RWPE1 (cell line): ENCODE measurements at regions of chr3 and their contacts with region 1.

Region 1: DNA sequence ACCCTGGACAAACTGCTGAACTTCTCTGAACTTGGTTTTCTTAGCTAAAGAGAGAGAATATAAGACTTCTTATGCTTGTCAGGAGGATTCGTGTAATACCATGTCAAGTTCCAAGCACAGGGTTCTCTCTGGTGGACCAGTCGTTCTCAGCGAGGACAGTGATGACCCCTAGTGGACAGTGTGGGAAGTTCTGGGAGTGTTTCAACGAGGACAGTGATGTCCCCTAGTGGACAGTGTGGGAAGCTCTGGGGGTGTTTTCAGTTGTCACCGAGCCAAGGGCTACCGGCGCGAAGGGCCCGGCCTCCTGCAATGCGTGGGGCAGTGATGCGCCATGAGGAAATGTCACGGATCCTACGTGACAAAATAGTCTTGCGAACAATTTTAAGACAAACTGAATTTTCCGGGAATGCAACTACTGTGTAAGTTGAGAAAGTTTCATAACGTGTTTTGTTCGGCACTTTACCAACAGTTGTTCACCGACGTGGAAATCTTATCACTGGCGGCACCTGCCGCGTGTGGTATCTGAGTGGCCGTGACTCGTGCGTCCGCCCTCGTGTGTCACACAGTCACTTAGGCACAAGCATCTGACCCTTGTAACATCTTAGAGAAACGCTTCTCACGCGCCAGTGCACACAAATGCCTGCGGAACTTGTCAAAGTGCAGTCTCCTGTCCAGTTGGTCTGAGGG is 39.3 kb upstream of the MUC4 start:
- DNase-seq: peak; percentile 88
- H3K27ac ChIP-seq: no peak overlapping the region
- CTCF ChIP-seq: peak; percentile 98

Region 2: DNA sequence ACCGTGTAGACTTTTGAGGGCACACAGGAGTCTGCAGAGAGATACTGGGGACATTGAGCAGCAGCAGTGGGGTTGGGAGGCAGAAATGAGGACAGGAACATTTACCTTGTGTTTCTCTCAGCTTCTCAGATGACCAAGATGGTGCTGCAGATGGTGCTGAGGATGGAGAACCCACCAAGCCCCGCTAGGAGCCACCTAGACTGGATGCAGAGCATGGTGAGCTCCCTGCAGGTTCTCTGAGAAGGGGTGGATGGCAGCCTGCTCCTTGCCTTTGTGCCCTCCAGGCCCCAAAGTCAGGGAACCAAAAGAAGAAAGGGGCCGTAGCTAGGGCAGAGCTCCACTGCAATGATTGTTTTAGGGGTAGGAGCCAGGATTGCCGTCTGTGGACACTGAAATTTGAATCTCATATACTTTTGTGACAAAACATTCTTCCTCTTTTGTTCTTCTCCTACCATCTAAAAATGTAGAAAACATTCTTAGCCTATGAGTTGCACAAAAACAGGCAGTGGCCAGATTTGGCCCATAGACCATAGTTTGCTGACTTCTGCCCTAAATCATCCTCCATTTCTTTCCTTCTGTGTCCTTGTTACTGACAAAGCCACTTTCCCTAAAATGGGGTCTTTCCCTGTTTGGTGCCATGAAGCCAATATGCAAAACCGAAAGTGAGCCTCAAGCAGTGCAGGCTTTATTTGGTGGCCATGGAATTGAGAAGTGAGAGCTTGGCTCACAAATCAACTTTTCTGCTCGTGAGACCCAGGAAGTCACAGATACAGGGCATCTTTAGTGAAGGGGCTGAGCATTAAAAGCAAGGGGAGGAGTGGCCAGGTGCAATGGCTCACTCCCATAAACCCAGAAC is 142.1 kb before region 1 on chr3:
- CTCF ChIA-PET with region 1: no interaction called
- POLR2A ChIA-PET with region 1: no interaction called
- DNase-seq: no peak
- H3K27ac ChIP-seq: no peak overlapping the region
- CTCF ChIP-seq: no peak

Region 3: GRCh38 chr3:195815169-195815771 is 35.7 kb before region 1 on chr3:
- CTCF ChIA-PET with region 1: interaction called, 11 read pairs
- POLR2A ChIA-PET with region 1: no interaction called
- DNase-seq: no peak
- H3K27ac ChIP-seq: no peak overlapping the region
- CTCF ChIP-seq: no peak

Region 4: GRCh38 chr3:195835791-195836190 is 15.2 kb before region 1 on chr3:
- CTCF ChIA-PET with region 1: interaction called, 10 read pairs
- POLR2A ChIA-PET with region 1: no interaction called
- DNase-seq: no peak
- H3K27ac ChIP-seq: no peak overlapping the region
- CTCF ChIP-seq: no peak

Region 5: GRCh38 chr3:195863121-195864006 is 12.4 kb after region 1 on chr3:
- CTCF ChIA-PET with region 1: interaction called, 21 read pairs
- POLR2A ChIA-PET with region 1: no interaction called
- DNase-seq: peak; percentile 77
- H3K27ac ChIP-seq: peak overlapping the region; percentile 98
- CTCF ChIP-seq: peak; percentile 98

Region 6: DNA sequence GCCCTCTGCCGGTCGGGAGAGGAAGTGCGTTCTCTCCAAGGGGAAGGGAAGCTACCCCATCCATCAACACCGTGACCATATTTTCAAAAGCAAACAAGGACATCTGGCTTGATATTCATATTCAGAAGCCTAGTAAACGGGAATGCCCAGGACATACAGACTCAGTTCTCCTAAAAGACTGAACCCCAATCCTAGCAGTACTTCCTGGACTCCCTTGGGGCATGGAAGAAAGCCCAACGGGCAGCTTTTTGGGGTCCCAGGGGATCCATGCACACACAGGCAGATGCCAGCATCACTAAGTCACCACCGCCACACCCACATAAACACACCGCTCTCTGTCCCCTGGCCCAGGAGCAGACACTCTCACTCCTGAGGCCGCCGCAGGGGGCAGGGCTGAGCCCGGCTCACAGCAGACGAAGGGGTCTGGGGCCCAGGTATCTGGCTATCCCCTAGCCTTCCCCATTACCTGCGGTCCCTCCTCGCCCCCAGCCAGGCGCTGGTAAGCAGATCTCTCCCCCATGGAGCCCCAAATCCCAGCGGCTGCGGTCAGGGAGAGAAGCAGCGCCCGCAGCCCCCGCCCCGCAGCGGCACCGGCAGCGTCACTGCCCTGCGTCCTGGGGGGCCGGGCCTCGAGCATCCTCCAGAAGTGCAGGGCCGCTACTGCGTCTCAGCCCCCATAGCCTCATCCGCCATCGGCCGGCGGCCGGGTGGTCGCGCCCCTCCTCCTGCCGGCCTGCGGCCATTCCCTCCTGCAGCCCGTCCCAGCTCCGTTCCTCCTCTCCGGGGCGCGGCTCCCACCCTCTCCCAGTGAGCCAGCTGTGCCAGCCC is 44.0 kb after region 1 on chr3:
- CTCF ChIA-PET with region 1: interaction called, 19 read pairs
- POLR2A ChIA-PET with region 1: no interaction called
- DNase-seq: peak; percentile 75
- H3K27ac ChIP-seq: peak overlapping the region; percentile 100
- CTCF ChIP-seq: peak; percentile 94

Region 7: GRCh38 chr3:195999896-196000295 is 148.9 kb after region 1 on chr3:
- CTCF ChIA-PET with region 1: interaction called, 11 read pairs
- POLR2A ChIA-PET with region 1: no interaction called
- DNase-seq: no peak
- H3K27ac ChIP-seq: no peak overlapping the region
- CTCF ChIP-seq: no peak